ENCODE measurements at regions of chr2 and their contacts with region 1.

Region 1: DNA sequence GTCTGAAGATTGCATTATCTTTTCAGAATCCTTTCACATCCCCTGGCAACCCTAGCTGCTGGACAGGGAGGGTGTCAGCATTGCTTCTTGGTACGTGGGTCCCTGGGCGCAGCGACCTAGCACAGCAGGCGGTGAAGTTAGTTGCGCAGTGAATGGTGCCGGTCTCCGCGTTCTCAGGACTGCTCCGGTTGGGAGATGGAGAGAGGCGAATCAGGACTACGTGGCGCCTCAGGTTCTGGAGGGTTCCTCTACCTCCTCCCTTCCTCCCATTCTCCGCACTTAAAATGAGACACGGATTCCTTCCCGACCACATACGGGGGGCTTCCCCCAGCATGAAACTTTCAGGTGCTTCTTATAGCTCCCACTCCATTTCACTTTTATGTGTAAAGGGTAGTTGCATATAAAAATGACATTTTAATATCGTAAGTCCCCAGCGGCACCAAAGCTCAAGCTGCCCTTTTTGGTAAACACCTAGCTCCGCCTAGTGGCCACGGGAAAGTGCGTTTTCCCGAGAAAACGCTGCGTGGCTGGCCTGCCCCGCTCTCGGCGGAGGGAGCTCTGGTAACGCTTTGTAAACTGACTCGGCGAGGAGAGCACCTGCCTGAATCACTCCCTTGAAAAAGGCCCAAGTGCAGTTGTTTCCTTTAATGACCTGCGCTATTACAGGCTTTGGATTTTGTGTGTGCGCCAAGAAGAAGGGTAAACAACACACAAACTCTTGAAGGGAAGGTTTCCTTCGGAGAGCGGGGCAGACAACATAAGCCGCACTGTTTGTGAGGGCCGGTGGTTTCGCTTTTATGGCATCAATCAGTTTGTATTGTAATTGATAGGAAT is 32.9 kb upstream of the INHBB start:
- DNase-seq: peak; percentile 78
- ATAC-seq: peak; percentile 79
- H3K4me3 Mint-ChIP-seq: peak overlapping the region; percentile 74
- H3K27ac Mint-ChIP-seq: no peak overlapping the region
- H3K4me1 Mint-ChIP-seq: peaks cover 12% of the 10 kb centered on the region
- H3K27me3 Mint-ChIP-seq: peaks cover 80% of the 10 kb centered on the region
- CTCF ChIP-seq: peak; percentile 57

Region 2: GRCh38 chr2:120206022-120206581 is 107.0 kb before region 1 on chr2:
- CTCF ChIA-PET with region 1: interaction called, 52 read pairs
- POLR2A ChIA-PET with region 1: no interaction called
- DNase-seq: peak; percentile 85
- ATAC-seq: peak; percentile 86
- H3K4me3 Mint-ChIP-seq: no peak overlapping the region
- H3K27ac Mint-ChIP-seq: no peak overlapping the region
- H3K4me1 Mint-ChIP-seq: peaks cover 4% of the 10 kb centered on the region
- H3K27me3 Mint-ChIP-seq: no peaks in the 10 kb centered on the region; the same call in 1 of the 2 replicates
- CTCF ChIP-seq: peak; percentile 81; the same call in 1 of the 2 replicates

Region 3: GRCh38 chr2:120252225-120253021 is 60.7 kb before region 1 on chr2 and contains the start of gene RALB:
- CTCF ChIA-PET with region 1: interaction called, 34 read pairs
- POLR2A ChIA-PET with region 1: interaction called, 5 read pairs
- DNase-seq: peak; percentile 100
- ATAC-seq: peak; percentile 92
- H3K4me3 Mint-ChIP-seq: peak within 1 kb of the TSS; percentile 99
- H3K27ac Mint-ChIP-seq: no peak within 1 kb of the TSS
- H3K4me1 Mint-ChIP-seq: peaks cover 43% of the 10 kb centered on the region
- H3K27me3 Mint-ChIP-seq: peaks cover 65% of the 10 kb centered on the region
- CTCF ChIP-seq: no peak
- total RNA-seq, gene RALB: 17.1 to 18.0 TPM (median 17.9 TPM) in 3 replicates

Region 4: DNA sequence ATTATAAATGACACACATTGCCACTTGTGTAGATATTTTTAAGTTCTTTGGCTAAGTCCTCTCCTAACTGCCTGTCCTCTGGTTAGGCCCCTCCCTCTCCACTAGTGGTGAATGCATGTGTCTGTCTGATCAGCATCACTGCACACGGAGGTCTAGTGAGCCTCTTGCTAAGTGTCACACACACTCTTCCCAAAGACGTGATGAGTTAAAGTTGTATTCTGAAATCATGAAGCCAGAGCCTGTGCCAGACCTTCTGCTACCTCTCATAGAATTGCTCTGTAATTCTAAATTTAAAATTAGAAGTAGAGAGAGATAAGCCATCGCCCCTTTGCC is 19.1 kb before region 1 on chr2:
- CTCF ChIA-PET with region 1: interaction called, 25 read pairs
- POLR2A ChIA-PET with region 1: no interaction called
- DNase-seq: no peak
- ATAC-seq: no peak
- H3K4me3 Mint-ChIP-seq: no peak overlapping the region
- H3K27ac Mint-ChIP-seq: no peak overlapping the region
- H3K4me1 Mint-ChIP-seq: peaks cover 46% of the 10 kb centered on the region
- H3K27me3 Mint-ChIP-seq: no peaks in the 10 kb centered on the region
- CTCF ChIP-seq: no peak

Region 5: DNA sequence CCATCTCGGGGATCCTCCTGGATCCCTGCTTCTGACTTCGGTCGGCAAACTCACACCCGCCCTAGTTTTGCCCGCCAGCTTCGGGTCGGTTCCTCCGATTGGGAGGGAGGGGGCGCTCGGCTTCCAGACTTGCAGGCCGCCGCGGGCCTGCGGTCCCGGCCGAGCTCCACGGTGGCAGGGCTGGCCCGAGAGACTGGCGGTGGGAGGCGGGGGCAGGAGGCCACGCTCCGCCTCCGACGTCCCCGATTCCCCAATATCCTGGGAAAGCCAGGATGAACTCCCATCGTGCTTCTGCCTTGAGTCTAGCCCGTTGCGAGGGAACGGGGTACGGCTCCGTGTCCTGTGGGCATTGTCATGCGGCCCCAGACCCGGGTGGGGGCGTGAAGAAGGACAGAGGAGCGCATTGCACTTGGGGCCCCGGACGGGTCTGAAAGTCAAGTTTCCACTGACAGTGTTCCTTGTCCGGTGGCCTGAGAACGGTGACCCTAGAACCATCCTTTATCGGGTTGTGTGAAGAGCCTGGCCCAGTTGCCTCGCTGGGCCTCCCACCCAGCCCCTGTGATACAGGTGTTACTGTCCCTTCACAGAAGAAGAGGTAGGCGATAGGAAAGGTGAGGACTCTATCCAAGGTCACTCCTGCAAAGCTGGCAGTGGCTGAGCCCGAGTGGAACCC is 30.5 kb after region 1 on chr2:
- CTCF ChIA-PET with region 1: interaction called, 23 read pairs
- POLR2A ChIA-PET with region 1: no interaction called
- DNase-seq: peak; percentile 90
- ATAC-seq: peak; percentile 78
- H3K4me3 Mint-ChIP-seq: peak overlapping the region; percentile 53
- H3K27ac Mint-ChIP-seq: no peak overlapping the region
- H3K4me1 Mint-ChIP-seq: peaks cover 31% of the 10 kb centered on the region
- H3K27me3 Mint-ChIP-seq: peaks cover 79% of the 10 kb centered on the region
- CTCF ChIP-seq: peak; percentile 61

Region 6: DNA sequence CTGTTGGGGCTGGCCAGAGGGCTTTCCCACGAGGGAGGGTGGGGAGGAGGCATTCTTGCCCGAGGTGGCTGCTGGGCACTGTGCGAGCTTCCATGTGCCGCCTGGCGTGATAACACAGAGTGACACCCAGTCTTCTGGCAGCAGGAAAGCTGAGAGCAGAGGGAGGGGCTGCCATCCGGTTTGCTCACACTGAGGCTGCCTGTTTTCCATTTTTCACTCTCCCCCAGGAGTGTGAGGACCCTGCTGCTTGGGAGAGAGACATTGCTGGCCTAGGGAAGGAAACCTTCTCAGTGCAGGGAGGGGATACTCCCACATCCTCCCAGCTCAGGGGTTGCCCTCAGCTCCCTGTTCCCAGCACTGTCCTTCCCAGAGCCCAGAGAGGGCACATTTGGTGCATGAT is 106.0 kb after region 1 on chr2:
- CTCF ChIA-PET with region 1: no interaction called
- POLR2A ChIA-PET with region 1: no interaction called
- DNase-seq: no peak
- ATAC-seq: no peak
- H3K4me3 Mint-ChIP-seq: no peak overlapping the region
- H3K27ac Mint-ChIP-seq: no peak overlapping the region
- H3K4me1 Mint-ChIP-seq: peaks cover 4% of the 10 kb centered on the region
- H3K27me3 Mint-ChIP-seq: peaks cover 30% of the 10 kb centered on the region
- CTCF ChIP-seq: no peak

Region 7: GRCh38 chr2:120520929-120521912 is 208.1 kb after region 1 on chr2:
- CTCF ChIA-PET with region 1: interaction called, 11 read pairs
- POLR2A ChIA-PET with region 1: no interaction called
- DNase-seq: peak; percentile 84
- ATAC-seq: peak; percentile 83
- H3K4me3 Mint-ChIP-seq: no peak overlapping the region
- H3K27ac Mint-ChIP-seq: no peak overlapping the region
- H3K4me1 Mint-ChIP-seq: peaks cover 19% of the 10 kb centered on the region
- H3K27me3 Mint-ChIP-seq: peaks cover 44% of the 10 kb centered on the region
- CTCF ChIP-seq: peak; percentile 95